ENCODE measurements at regions of chr14 and their contacts with region 1.

Region 1: DNA sequence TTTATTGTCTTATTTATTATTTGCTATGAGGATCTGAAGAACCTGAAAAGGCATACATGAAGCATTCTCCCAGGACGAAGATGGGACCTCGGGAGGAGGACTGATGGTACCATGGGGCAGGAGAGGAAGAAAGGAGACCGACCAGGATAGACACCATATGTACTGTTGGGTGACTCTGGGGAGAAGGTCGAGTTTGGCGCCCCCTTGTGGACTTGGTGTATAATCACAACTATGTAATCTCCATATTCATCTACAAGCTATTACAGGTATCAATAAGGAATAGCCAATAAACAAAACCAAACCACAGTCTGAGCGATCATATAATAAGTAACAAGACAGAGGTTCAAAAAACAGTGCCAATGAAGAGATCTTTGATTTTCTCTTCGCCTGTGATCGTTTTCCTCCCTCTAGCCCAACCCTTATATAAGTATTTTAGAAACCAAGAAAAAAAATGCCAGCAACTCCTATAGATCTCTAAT is 139.1 kb downstream of the SPTSSA start:
- DNase-seq: peak; percentile 85
- H3K4me3 Mint-ChIP-seq: no peak overlapping the region
- H3K27ac Mint-ChIP-seq: no peak overlapping the region
- H3K4me1 Mint-ChIP-seq: peaks cover 10% of the 10 kb centered on the region
- H3K27me3 Mint-ChIP-seq: no peaks in the 10 kb centered on the region
- CTCF ChIP-seq: peak; percentile 75

Region 2: DNA sequence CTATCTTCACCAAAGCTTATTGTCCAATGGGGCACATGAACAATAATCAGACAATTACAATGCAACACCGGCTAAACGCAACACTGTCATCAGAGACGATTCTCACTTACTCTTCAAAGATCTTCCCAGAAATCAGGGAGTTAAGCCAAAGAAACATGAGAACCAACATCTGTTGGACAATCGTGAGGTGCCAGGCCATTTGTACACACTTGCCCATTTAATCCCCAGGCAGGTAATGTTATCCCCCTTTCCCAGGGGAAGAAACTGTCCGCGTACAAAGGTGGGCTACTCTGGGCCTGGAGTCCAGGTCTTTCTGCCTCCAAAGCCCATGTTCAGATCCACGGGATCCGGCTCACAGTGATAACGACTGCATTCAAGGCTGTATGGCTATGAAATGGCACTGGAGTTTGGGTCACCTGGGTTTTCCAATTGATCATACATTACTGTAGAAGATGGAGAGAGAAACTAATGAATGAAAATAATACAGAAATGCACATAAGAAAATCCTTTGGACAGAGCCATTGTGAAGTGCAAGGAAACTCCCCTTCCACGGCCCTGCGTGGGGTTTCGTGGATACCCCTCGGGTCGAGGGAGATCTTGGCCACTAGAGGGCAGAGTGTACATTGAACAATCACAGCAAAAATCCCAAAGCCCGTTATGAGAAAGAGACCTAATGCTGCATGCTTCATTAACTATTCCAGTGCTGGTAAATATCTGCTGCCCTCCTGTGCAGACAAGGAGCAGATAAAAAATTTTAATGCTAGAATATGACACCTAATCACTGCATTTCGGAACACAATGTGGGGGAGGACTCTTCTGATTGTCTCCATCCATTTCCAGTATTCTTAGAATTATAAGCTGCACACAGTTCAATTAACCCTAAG is 483.5 kb before region 1 on chr14:
- CTCF ChIA-PET with region 1: interaction called, 9 read pairs
- POLR2A ChIA-PET with region 1: no interaction called
- intact Hi-C with region 1: loop called (anchors 5 kb)
- DNase-seq: peak; percentile 56
- H3K4me3 Mint-ChIP-seq: no peak overlapping the region
- H3K27ac Mint-ChIP-seq: no peak overlapping the region
- H3K4me1 Mint-ChIP-seq: peaks cover 11% of the 10 kb centered on the region
- H3K27me3 Mint-ChIP-seq: no peaks in the 10 kb centered on the region
- CTCF ChIP-seq: peak; percentile 76

Region 3: GRCh38 chr14:34227834-34228649 is 94.9 kb before region 1 on chr14:
- CTCF ChIA-PET with region 1: interaction called, 11 read pairs
- POLR2A ChIA-PET with region 1: no interaction called
- intact Hi-C with region 1: no loop called
- DNase-seq: peak; percentile 70
- H3K4me3 Mint-ChIP-seq: peak overlapping the region; percentile 46
- H3K27ac Mint-ChIP-seq: peak overlapping the region; percentile 50
- H3K4me1 Mint-ChIP-seq: peaks cover 31% of the 10 kb centered on the region
- H3K27me3 Mint-ChIP-seq: no peaks in the 10 kb centered on the region
- CTCF ChIP-seq: peak; percentile 76

Region 4: DNA sequence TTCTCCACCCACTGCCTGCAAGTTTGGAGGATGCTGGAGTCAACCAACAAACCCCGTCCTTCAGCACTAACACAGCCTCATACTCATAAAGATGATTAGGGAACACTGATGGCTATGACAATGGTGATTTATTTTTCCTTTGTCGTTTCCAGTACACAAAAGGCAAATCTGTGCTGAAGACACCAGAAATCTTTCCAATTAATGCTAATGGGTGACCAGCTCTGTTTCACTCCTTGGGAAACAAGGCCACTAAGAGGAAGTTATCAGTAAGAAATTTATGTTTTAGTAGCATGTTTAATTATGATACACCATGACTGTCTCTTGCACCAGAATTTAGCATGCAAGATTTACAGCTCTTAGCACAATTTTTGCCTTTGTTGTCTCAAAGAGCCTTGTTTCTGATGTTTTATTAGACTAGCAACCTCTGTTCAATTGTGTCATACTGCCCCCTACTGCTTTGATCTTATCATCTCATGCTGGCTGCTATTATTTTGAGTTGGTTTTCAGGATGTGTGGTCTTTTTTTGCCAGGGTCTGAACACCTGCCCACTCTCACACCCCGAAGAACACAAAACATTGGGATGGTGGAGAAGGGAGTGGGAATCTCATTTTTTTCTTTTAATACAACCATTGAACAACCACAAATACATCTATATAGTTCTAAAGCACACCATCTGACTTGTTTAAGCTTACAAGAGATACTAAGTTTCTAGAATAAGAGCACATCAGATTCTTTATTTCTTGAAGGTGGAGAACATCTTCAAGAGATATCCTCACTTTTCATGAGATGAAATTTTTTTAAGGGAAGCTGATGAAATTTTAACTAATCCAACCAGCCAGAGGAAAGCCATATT is 21.9 kb before region 1 on chr14:
- CTCF ChIA-PET with region 1: interaction called, 78 read pairs
- POLR2A ChIA-PET with region 1: no interaction called
- intact Hi-C with region 1: no loop called
- DNase-seq: peak; percentile 73
- H3K4me3 Mint-ChIP-seq: no peak overlapping the region
- H3K27ac Mint-ChIP-seq: peak overlapping the region; percentile 57
- H3K4me1 Mint-ChIP-seq: peaks cover 18% of the 10 kb centered on the region
- H3K27me3 Mint-ChIP-seq: no peaks in the 10 kb centered on the region
- CTCF ChIP-seq: peak; percentile 76

Region 5: GRCh38 chr14:34310724-34311123 is 12.3 kb before region 1 on chr14:
- CTCF ChIA-PET with region 1: interaction called, 78 read pairs
- POLR2A ChIA-PET with region 1: interaction called, 3 read pairs
- intact Hi-C with region 1: no loop called
- DNase-seq: no peak
- H3K4me3 Mint-ChIP-seq: no peak overlapping the region
- H3K27ac Mint-ChIP-seq: no peak overlapping the region
- H3K4me1 Mint-ChIP-seq: no peaks in the 10 kb centered on the region
- H3K27me3 Mint-ChIP-seq: no peaks in the 10 kb centered on the region
- CTCF ChIP-seq: no peak

Region 6: DNA sequence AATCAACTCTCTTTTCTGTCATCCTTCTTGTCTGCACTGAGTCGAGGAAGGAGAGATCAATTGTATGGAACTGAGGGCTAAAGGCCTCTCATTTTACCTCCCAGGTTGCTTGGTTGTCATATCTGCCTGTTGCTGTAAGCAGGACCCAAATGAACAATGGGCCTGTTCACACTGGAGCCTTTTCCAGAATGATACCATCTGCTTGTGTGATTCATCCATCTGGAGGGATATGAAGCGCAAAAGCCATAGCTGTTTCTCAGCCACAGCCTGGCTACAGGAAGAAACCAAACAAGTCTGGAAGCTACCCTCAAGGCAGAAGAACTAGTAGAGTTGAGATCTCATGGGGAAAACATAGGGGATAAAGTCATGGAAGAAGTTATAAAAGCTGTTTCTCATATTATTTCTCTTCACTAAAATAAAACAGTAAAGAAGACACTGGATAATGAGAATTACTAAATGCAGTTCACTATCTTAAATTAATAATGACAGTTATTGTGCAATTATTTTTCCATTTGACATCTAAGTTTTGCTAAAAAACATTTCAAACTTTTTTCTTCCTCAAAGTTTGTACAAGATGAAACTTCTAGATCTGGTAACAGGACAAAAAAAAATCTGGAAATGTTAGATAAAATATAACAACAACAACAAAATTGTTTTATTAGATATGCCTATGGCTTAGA is 32.7 kb after region 1 on chr14:
- CTCF ChIA-PET with region 1: interaction called, 10 read pairs
- POLR2A ChIA-PET with region 1: interaction called, 5 read pairs
- intact Hi-C with region 1: no loop called
- DNase-seq: peak; percentile 67
- H3K4me3 Mint-ChIP-seq: no peak overlapping the region
- H3K27ac Mint-ChIP-seq: peak overlapping the region; percentile 59
- H3K4me1 Mint-ChIP-seq: peaks cover 30% of the 10 kb centered on the region
- H3K27me3 Mint-ChIP-seq: no peaks in the 10 kb centered on the region
- CTCF ChIP-seq: no peak

Measured in MCF 10A (cell line).